ENCODE measurements at regions of chr5 and their contacts with region 1.

Region 1: DNA sequence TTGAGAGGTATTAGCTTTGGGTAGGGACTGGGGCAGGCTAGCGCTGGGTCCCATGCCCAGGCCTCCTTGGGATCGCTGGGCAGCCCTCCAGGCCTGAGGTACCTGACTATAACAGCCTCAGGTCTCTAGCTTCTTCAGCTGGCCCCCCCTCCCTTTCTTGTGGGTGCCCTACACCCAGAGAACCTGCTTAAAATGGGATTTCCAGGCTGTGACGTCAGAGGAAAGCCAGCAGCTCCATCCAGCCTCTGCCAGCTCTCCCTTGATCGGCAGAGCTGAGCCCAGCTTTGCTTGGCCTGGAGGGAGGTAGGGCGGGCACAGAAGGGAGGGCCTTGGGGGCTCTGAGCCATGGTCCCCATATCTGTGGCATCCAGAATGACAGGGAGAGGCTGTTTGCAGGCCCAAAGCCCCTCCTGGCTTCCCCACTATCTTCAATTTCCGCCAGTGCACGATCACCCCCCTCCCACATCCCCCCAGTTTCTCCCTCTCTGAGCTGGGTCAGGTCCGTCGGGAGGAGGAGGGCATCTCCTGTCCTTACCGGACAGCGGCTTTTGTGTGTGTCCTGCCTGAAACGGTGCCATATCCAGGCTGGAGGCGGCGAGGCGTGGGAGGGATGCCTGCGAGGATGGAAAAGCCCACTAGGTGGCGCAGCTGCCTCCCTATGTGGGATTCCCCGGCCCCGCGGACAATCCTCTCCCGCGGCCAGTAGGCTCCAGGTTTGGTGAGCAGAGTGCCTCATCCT is 10.8 kb downstream of the REEP2 start:
- DNase-seq: peak; percentile 81
- H3K4me3 ChIP-seq: no peak overlapping the region
- H3K27ac ChIP-seq: no peak overlapping the region
- H3K4me1 ChIP-seq: peaks cover 3% of the 10 kb centered on the region
- CTCF ChIP-seq: peak; percentile 92

Region 2: DNA sequence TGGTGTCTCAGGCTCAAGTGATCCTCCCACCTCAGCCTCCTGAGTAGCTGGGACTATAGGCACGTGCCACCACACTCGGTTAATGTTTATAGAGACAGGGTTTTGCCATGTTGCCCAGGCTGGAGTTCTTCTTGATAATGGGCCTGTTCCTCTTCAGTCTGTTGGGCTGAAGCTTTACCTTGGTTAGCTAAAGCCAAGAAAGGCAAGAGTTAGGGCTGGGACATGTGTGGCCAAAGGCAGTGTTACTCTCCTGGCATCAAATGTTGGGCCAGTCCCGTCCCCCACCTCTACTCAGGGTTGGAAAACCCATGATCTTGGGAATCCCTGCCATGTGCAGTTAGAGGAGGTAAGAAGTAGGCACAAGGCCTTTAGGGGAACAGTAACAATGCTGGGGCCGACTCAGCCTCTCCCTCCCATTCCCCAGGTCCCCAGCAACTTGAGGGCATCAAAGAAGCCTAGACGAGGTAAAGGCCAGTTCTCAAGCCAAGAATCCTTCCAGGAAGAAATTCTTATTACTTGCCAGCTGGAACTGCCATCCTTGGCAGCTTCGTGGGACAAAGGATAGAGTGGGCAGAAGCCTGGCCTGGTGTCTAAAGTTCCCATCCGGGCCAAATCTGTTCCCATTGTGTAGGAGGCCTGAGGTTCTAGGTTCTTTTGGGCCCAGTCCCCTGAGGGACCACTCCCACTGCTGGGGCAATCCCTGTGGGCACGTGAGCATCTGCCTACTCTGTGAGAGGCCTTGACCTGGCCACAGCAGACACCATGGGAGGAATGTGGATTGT is 20.1 kb after region 1 on chr5:
- CTCF ChIA-PET with region 1: no interaction called
- POLR2A ChIA-PET with region 1: no interaction called
- intact Hi-C with region 1: no loop called
- DNase-seq: no peak
- H3K4me3 ChIP-seq: no peak overlapping the region
- H3K27ac ChIP-seq: no peak overlapping the region
- H3K4me1 ChIP-seq: peaks cover 9% of the 10 kb centered on the region
- CTCF ChIP-seq: no peak

Region 3: GRCh38 chr5:138482638-138483037 is 33.0 kb after region 1 on chr5:
- CTCF ChIA-PET with region 1: interaction called, 21 read pairs
- POLR2A ChIA-PET with region 1: no interaction called
- intact Hi-C with region 1: no loop called
- DNase-seq: no peak
- H3K4me3 ChIP-seq: no peak overlapping the region
- H3K27ac ChIP-seq: no peak overlapping the region
- H3K4me1 ChIP-seq: no peaks in the 10 kb centered on the region
- CTCF ChIP-seq: no peak

Region 4: GRCh38 chr5:138503487-138504270 is 54.0 kb after region 1 on chr5:
- CTCF ChIA-PET with region 1: interaction called, 5 read pairs
- POLR2A ChIA-PET with region 1: interaction called, 6 read pairs
- intact Hi-C with region 1: loop called (anchors 1 kb)
- DNase-seq: peak; percentile 68
- H3K4me3 ChIP-seq: no peak overlapping the region
- H3K27ac ChIP-seq: no peak overlapping the region
- H3K4me1 ChIP-seq: no peaks in the 10 kb centered on the region
- CTCF ChIP-seq: peak; percentile 87

Region 5: DNA sequence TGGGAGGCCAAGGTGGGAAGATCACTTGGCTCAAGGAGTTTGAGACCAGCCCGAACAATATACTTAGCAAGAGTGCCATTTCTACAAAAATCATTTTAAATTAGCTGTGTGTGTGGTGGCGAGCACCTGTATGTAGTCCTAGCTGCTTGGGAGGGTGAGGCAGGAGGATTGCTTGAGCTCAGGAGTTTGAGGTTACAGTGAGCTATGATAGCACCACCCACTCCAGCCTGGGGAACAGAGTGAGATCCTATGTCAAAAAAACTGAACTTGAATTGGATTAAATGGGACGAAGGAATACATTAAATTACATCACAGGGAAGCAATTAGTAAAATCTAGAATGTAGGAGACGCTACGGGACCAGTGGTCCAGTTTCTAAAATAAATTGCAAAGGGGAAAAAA is 99.7 kb after region 1 on chr5:
- CTCF ChIA-PET with region 1: no interaction called
- POLR2A ChIA-PET with region 1: no interaction called
- intact Hi-C with region 1: loop called (anchors 2 kb)
- DNase-seq: no peak
- H3K4me3 ChIP-seq: no peak overlapping the region
- H3K27ac ChIP-seq: no peak overlapping the region
- H3K4me1 ChIP-seq: peaks cover 19% of the 10 kb centered on the region
- CTCF ChIP-seq: no peak